Left ventricle myocardium inferior (tissue), 1 donor: ENCODE measurements at regions of chr2 and their contacts with region 1.

Region 1: GRCh38 chr2:172102391-172103278 is at the start of gene DLX2:
- DNase-seq: peak; percentile 73
- H3K4me3 ChIP-seq: peak within 1 kb of the TSS; percentile 67
- H3K27ac ChIP-seq: no peak within 1 kb of the TSS
- H3K4me1 ChIP-seq: peaks cover 68% of the 10 kb centered on the region
- H3K27me3 ChIP-seq: peaks cover 100% of the 10 kb centered on the region
- CTCF ChIP-seq: no peak
- total RNA-seq, gene DLX2: not detected

Region 2: DNA sequence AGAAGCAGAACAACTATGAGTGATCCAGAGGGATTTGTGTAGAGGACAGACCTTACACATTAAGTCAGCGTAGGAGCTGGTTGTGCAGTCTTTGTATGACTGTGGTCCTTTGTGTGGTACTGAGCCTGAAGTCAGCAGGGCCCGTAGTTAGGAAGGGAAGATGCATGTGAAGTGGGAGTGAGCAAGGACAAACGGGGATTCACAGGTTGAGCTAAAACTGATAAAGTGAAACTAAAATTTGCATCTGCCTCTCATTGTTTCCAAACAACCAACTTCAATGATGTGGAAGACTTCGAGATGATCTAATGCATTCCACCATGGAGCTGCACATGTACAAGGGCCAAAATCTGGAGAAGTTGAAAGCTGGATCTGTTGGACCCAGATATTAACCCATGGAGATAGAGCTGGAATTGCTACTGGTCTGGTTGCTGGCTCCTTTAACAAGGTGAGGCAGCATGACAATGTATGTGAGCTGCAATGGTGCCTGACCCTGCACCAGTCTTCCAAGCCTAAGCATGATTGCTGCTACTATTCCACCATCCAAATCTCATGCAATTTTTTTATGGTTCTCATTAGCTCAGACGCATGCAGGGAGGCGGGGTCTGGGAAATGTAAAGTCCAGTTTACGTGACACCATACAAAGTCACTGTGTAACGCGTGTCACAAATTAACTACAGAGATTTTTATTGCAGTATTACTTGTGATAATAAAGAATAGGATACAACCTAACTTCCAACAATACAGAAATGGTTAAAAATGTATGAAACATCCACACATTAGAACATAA is 592.5 kb before region 1 on chr2:
- intact Hi-C with region 1: no loop called
- DNase-seq: no peak
- H3K4me3 ChIP-seq: no peak overlapping the region
- H3K27ac ChIP-seq: no peak overlapping the region
- H3K4me1 ChIP-seq: peaks cover 16% of the 10 kb centered on the region
- H3K27me3 ChIP-seq: no peaks in the 10 kb centered on the region
- CTCF ChIP-seq: no peak

Region 3: DNA sequence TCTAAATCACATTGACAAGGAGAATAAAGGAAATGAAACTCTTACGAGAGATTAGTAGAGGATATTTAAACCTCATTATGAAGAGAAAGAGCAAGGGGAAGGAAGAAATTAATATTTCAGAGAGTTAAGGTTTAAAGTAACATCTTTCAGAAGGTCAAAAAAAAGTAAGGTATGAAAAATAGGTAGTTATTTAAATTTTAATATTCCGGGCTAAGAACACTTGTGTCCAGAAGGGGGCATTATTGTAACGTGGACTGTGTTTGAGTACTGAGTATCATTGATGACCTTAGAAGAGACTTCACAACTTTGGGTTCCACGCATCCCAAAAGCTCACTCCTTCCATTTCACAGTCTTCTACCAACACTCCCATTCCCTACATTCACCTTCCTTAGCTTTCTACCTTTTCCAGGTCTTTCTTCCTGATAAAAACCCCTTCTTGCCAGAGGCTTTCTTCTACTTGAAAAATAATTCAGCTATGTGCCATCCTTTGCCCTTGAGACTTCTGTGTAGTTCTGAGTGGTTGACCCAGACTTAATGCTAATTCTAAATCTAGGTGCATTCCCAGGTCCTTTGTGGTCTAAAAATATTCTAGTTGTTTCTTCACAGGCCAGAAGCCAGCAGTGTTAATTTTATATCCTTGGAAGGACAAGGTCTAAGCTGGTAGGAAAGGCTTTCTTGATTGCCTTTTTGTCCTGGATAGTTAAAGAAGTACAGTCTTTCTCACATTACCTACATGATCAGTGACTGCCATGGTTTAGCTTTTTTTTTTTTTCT is 398.9 kb before region 1 on chr2:
- intact Hi-C with region 1: loop called (anchors 10 kb)
- DNase-seq: no peak
- H3K4me3 ChIP-seq: no peak overlapping the region
- H3K27ac ChIP-seq: peak overlapping the region; percentile 67
- H3K4me1 ChIP-seq: peaks cover 47% of the 10 kb centered on the region
- H3K27me3 ChIP-seq: no peaks in the 10 kb centered on the region
- CTCF ChIP-seq: peak; percentile 55

Region 4: DNA sequence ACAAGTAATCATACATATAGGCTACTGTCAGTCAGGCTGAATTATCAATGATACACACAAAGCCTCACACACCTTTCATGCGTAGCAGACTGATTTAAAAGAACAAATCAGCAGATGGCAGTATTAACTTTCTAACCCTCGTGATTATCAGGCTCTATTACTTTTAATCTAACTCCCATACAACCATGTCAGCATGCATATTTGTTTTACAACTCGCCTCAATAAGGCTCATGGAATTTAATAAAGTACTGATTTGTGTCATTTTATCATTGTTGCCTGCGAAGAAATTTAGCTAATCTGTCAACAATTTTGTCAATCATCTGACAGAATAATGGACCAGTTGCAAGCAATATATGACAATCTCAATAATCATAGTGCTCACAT is 291.4 kb before region 1 on chr2:
- intact Hi-C with region 1: loop called (anchors 10 kb)
- DNase-seq: no peak
- H3K4me3 ChIP-seq: no peak overlapping the region
- H3K27ac ChIP-seq: no peak overlapping the region
- H3K4me1 ChIP-seq: peaks cover 22% of the 10 kb centered on the region
- H3K27me3 ChIP-seq: no peaks in the 10 kb centered on the region
- CTCF ChIP-seq: peak; percentile 47

Region 5: GRCh38 chr2:171991027-171991426 is 111.6 kb before region 1 on chr2:
- intact Hi-C with region 1: no loop called
- DNase-seq: no peak
- H3K4me3 ChIP-seq: no peak overlapping the region
- H3K27ac ChIP-seq: no peak overlapping the region
- H3K4me1 ChIP-seq: no peaks in the 10 kb centered on the region
- H3K27me3 ChIP-seq: no peaks in the 10 kb centered on the region
- CTCF ChIP-seq: no peak